Common myeloid progenitor, CD34-positive (primary cell): ENCODE measurements at regions of chr2 and their contacts with region 1.

Region 1: DNA sequence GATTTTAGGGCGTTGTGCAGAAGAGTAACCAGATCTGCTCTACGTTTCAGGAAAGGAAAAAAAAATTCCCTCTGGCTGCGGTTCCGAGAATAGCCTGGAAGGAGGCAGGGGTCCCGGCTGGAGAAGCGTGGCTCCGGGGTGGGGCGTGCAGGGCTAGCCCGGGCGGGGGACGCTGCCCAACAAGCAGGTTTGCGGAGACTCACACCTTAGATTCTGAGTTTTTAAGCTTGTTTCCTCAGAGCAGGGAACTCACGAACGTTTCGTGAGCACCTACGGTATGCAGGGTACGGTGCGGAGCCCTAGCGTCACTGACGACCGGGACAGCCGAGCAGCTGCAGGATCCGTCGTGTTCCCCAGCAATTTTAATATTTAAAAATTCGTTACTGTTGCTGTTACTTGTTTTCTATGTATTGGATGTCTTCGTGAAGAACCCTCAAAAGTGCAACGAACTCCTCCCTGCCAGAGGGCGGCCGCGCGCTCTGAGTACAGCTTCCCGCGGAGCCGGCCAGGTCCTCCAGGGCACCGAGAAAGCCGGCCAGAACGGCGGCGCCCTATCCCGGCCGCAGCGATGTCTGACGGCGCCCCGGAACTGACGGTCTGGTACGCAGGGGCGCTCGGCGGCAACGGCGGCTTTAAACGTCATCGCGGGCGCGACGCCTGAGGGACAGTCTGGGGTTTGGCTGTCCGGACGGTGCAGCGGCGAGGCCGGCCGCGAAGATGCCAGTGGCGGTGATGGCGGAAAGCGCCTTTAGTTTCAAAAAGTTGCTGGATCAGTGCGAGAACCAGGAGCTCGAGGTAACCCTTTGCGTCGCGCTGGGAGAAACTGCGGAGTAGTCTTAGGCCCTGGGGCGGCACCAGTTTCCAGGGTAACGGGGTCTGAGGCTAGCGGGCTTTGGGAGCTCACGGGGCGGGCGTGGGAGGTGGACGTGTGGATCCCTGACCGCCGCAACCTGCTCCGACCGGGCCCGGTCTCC is at the start of gene COPS8:
- DNase-seq: peak; percentile 89 to 95 (median 91)
- H3K4me3 ChIP-seq: peak within 1 kb of the TSS; percentile 75 to 99 (median 91)
- H3K27ac ChIP-seq: peak within 1 kb of the TSS; percentile 82 to 91
- H3K4me1 ChIP-seq: peaks cover 10 to 21% (median 15%) of the 10 kb centered on the region in 4 experiments
- H3K27me3 ChIP-seq: no peaks in the 10 kb centered on the region

Region 2: DNA sequence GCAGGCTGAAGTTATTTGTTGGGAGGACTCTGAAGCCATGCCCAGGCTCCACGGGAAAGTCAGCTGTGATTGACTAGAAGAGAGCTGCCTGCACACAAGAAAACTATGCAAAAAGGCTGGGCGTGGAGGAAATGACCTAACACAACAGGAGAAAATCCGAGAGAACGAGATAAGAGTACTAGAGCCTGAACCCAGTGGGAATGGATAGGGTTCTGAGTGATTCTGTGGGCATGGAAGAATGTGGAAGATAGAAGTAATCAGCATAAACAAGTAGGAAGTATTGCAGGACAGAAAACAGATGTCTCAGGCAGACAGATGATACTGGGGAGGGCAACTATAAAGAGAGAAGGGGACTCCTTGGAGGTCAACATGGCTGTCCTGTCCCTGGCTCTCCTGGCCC is 12.0 kb before region 1 on chr2:
- CTCF ChIA-PET with region 1: interaction called, 10 read pairs
- POLR2A ChIA-PET with region 1: no interaction called
- DNase-seq: no peak
- H3K4me3 ChIP-seq: no peak overlapping the region
- H3K27ac ChIP-seq: no peak overlapping the region
- H3K4me1 ChIP-seq: no peaks in the 10 kb centered on the region
- H3K27me3 ChIP-seq: no peaks in the 10 kb centered on the region